Activated CD4-positive, alpha-beta memory T cell treated with anti-CD3 and anti-CD28 coated beads, Interleukin-2, amount 10 ng/mL, durations not matched to agents 7 days and 5 days (primary cell): ENCODE measurements at regions of chr16 and their contacts with region 1.

Region 1: DNA sequence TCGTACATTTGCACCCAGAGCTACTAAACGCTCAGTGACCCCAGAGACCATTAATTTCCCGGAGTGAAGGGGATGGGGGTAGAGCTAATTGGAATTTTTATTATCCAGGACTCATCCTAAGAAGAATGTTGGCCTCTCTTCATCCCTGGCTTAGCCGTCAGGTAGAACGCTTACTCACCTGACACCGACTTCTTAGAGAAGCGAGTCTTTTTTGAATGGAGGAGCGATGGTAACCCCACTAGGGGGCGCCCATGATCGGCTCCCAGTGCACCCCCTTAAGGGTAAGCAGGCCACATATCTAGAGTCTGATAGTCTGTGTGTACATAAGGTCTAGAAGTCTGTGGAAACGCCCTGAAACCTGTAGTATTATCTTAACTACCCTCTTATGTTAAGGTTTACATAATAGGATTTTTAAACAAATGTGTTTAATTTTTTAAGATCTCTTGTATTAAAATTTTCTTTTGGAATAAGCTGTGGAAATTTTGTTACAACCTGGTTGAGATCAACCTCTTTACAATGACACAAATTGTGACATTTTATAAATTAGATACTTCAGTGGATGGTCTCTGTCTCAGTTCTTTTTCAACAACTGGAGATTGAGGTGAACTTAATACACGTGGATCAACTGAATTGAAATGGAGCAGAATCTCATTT is 229.8 kb downstream of the CPPED1 start:
- DNase-seq: peak; percentile 76
- H3K4me3 Mint-ChIP-seq: no peak overlapping the region
- H3K27ac Mint-ChIP-seq: no peak overlapping the region
- H3K4me1 Mint-ChIP-seq: peaks cover 19% of the 10 kb centered on the region
- H3K27me3 Mint-ChIP-seq: no peaks in the 10 kb centered on the region

Region 2: GRCh38 chr16:12535535-12536411 is 38.1 kb before region 1 on chr16:
- CTCF ChIA-PET with region 1: interaction called, 3 read pairs
- POLR2A ChIA-PET with region 1: interaction called, 13 read pairs
- DNase-seq: peak; percentile 72
- H3K4me3 Mint-ChIP-seq: peak overlapping the region; percentile 63
- H3K27ac Mint-ChIP-seq: peak overlapping the region; percentile 95
- H3K4me1 Mint-ChIP-seq: peaks cover 98% of the 10 kb centered on the region
- H3K27me3 Mint-ChIP-seq: no peaks in the 10 kb centered on the region

Region 3: GRCh38 chr16:12558641-12559040 is 15.2 kb before region 1 on chr16:
- CTCF ChIA-PET with region 1: no interaction called
- POLR2A ChIA-PET with region 1: no interaction called
- DNase-seq: no peak
- H3K4me3 Mint-ChIP-seq: no peak overlapping the region
- H3K27ac Mint-ChIP-seq: no peak overlapping the region
- H3K4me1 Mint-ChIP-seq: peaks cover 4% of the 10 kb centered on the region
- H3K27me3 Mint-ChIP-seq: no peaks in the 10 kb centered on the region

Region 4: GRCh38 chr16:12699161-12699560 is 125.3 kb after region 1 on chr16:
- CTCF ChIA-PET with region 1: no interaction called
- POLR2A ChIA-PET with region 1: no interaction called
- DNase-seq: no peak
- H3K4me3 Mint-ChIP-seq: no peak overlapping the region
- H3K27ac Mint-ChIP-seq: no peak overlapping the region
- H3K4me1 Mint-ChIP-seq: peaks cover 16% of the 10 kb centered on the region
- H3K27me3 Mint-ChIP-seq: no peaks in the 10 kb centered on the region

Region 5: GRCh38 chr16:12819126-12820117 is 245.6 kb after region 1 on chr16:
- CTCF ChIA-PET with region 1: interaction called, 20 read pairs
- POLR2A ChIA-PET with region 1: no interaction called
- DNase-seq: peak; percentile 79
- H3K4me3 Mint-ChIP-seq: no peak overlapping the region
- H3K27ac Mint-ChIP-seq: no peak overlapping the region
- H3K4me1 Mint-ChIP-seq: peaks cover 27% of the 10 kb centered on the region
- H3K27me3 Mint-ChIP-seq: no peaks in the 10 kb centered on the region